ENCODE measurements at regions of chr1 and their contacts with region 1.

Region 1: GRCh38 chr1:1033009-1033587 is 13.2 kb downstream of the AGRN start:
- DNase-seq: peak; percentile 72
- ATAC-seq: peak; percentile 92
- H3K4me3 ChIP-seq: peak overlapping the region; percentile 50; the same call in 1 of the 2 replicates
- H3K27ac ChIP-seq: no peak overlapping the region
- H3K4me1 ChIP-seq: peaks cover 27% of the 10 kb centered on the region
- H3K27me3 ChIP-seq: no peaks in the 10 kb centered on the region
- CTCF ChIP-seq: peak; percentile 80 to 97 (median 84)
- EP300 ChIP-seq: 0 out of 4 replicates have a peak, but pooled peaks of 1 of the 2 experiments have one; percentile 35
- POLR2A ChIP-seq: no peak
- RAD21 ChIP-seq: peak; percentile 74

Region 2: GRCh38 chr1:999725-1000356 is 33.3 kb before region 1 on chr1 and contains the start of gene HES4:
- CTCF ChIA-PET with region 1: interaction called, 13 read pairs
- POLR2A ChIA-PET with region 1: interaction called, 7 read pairs
- RAD21 ChIA-PET with region 1: interaction called, 6 read pairs
- SMC1A ChIA-PET with region 1: no interaction called
- in situ Hi-C with region 1: no loop called
- intact Hi-C with region 1: no loop called
- DNase-seq: no peak
- ATAC-seq: peak; percentile 59
- H3K4me3 ChIP-seq: peak within 1 kb of the TSS; percentile 66
- H3K27ac ChIP-seq: no peak within 1 kb of the TSS
- H3K4me1 ChIP-seq: peaks cover 19% of the 10 kb centered on the region
- H3K27me3 ChIP-seq: peaks cover 0 to 20% of the 10 kb centered on the region in 2 experiments; a peak in 2 of 4 replicates
- CTCF ChIP-seq: no peak
- EP300 ChIP-seq: no peak
- POLR2A ChIP-seq: 0 out of 2 replicates have a peak, but pooled peaks have one; percentile 16
- RAD21 ChIP-seq: no peak
- polyA plus RNA-seq, gene HES4: not detected

Region 3: GRCh38 chr1:1013105-1013921 is 19.8 kb before region 1 on chr1 and contains the start of gene ISG15:
- CTCF ChIA-PET with region 1: interaction called, 53 read pairs
- POLR2A ChIA-PET with region 1: interaction called, 15 read pairs
- RAD21 ChIA-PET with region 1: interaction called, 28 read pairs
- SMC1A ChIA-PET with region 1: interaction called, 4 read pairs
- in situ Hi-C with region 1: no loop called
- intact Hi-C with region 1: no loop called
- DNase-seq: peak; percentile 79
- ATAC-seq: peak; percentile 91
- H3K4me3 ChIP-seq: peak within 1 kb of the TSS; percentile 90
- H3K27ac ChIP-seq: peak within 1 kb of the TSS; percentile 92
- H3K4me1 ChIP-seq: peaks cover 12% of the 10 kb centered on the region
- H3K27me3 ChIP-seq: no peaks in the 10 kb centered on the region
- CTCF ChIP-seq: no peak
- EP300 ChIP-seq: peak in 1 of 2 experiments; percentile 39; a peak in 1 of 4 replicates
- POLR2A ChIP-seq: peak; percentile 81
- RAD21 ChIP-seq: no peak
- polyA plus RNA-seq, gene ISG15: 68.9 to 126 TPM

Region 4: DNA sequence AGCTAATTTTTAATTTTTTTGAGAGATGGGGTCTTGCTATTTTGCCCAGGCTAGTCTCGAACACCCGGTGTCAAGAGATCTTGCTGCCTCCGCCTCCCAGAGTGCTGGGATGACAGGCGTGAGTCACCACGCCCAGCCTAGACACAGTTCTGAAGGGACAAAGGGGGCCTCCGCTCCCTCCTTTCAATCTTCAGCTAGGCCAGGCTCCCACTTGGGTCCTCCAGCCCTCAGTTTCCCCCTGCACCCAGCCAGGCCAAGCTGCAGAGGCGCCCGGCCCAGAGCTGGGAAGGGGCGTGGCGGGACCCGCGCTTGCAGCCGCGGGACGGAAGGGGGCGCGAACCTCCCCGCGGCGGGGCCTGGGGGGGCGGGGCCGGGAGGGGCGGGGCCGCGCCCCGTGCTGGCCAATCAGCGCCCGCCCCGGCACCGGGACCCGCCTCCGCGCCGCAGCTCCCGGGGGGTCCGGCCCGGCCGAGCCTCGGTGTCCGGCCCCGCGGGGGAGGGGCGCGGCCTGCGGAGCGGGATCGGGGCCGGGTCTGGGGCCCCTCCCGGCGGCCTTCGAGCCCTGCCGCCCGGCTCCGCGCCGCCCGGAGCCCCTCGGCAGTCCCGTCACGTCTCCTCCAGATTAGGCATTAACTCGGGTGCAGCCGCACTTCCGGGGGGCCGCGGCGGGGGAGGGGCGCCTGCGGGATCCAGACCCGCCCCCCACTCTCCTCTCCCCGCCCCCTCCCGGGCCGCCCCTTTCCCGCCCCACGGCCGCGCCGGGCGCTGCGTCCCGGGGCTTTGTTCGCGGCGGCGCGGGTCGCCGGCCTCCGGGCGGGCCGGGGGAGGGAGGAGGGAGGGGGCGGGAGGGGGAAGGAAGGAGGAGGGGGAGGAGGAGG is 13.7 kb before region 1 on chr1:
- CTCF ChIA-PET with region 1: interaction called, 53 read pairs
- POLR2A ChIA-PET with region 1: interaction called, 15 read pairs
- RAD21 ChIA-PET with region 1: interaction called, 28 read pairs
- SMC1A ChIA-PET with region 1: interaction called, 10 read pairs
- in situ Hi-C with region 1: no loop called
- intact Hi-C with region 1: no loop called
- DNase-seq: no peak
- ATAC-seq: peak; percentile 64
- H3K4me3 ChIP-seq: no peak overlapping the region
- H3K27ac ChIP-seq: peak overlapping the region; percentile 65
- H3K4me1 ChIP-seq: peaks cover 14% of the 10 kb centered on the region
- H3K27me3 ChIP-seq: no peaks in the 10 kb centered on the region
- CTCF ChIP-seq: peak; percentile 31 to 60 (median 59)
- EP300 ChIP-seq: no peak
- POLR2A ChIP-seq: no peak; the same call in 1 of the 2 replicates
- RAD21 ChIP-seq: no peak; the same call in 1 of the 2 replicates

Region 5: DNA sequence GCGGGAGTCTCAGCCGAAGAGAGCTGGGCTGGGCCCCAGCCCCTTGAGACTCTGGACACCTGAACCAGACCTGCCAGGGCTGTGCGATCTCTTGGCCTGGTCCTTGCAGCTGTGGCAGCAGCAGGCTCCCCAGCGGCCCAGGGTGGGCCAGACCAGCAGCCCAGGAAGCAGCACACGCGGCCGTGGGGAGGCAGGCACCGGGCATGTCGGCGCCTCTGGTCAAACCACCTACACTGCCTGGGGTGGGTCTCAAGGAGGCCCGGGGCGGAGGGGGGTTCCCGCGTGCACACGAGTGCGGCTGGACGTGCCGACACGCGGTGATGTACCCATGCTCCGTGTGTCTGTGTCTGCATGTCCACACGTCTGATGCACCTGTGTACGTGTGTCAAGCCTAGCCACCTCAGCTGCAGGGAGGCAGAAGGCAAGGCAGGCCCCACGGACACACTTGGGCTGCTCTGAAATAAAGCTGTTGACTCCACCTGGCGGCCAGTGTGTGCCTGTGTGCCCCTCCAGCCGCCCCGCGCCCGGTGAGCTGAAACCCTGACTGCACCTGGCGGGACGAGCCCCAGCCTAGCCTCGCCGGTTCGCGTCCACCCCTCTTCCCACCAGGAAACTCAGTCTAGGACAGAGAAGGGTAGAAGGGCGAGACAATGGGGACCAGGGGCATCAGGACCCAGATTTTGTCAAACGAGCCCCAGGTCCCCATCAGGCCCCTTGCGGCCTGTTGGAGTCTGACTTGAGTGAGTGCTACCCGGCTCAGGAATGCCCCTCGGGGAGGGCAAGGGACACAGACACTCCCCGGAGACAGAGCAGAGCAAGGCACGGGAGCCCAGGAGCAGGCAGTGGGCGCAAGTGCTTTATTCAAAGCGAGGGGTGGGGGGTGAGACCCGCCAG is 258.7 kb after region 1 on chr1:
- CTCF ChIA-PET with region 1: interaction called, 4 read pairs
- POLR2A ChIA-PET with region 1: no interaction called
- RAD21 ChIA-PET with region 1: interaction called, 21 read pairs
- SMC1A ChIA-PET with region 1: no interaction called
- in situ Hi-C with region 1: no loop called
- intact Hi-C with region 1: loop called (anchors 2 kb)
- DNase-seq: no peak
- ATAC-seq: peak; percentile 96
- H3K4me3 ChIP-seq: no peak overlapping the region
- H3K27ac ChIP-seq: no peak overlapping the region
- H3K4me1 ChIP-seq: no peaks in the 10 kb centered on the region
- H3K27me3 ChIP-seq: no peaks in the 10 kb centered on the region
- CTCF ChIP-seq: peak; percentile 78 to 85 (median 79)
- EP300 ChIP-seq: no peak
- POLR2A ChIP-seq: peak; percentile 60
- RAD21 ChIP-seq: peak; percentile 62

Measured in GM12878 (cell line).